ENCODE measurements at regions of chr19 and their contacts with region 1.

Region 1: DNA sequence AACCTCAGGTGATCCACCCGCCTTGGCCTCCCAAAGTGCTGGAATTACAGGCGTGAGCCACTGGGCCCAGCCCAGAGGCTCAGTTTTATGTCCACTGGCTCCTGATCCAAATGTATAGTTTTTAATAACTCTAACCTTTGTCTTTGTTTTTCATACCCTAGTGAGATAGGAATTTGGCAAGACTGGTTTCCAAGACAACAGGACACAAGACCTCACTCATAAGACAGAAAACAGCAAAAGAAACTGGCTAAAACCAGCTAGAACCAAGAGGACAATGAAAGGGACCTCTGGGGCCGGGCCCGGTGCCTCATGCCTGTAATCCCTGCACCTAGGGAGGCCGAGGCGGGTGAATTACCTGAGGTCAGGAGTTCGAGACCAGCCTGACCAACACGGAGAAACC is 27.6 kb downstream of the CPT1C start:
- DNase-seq: no peak
- ATAC-seq: no peak
- H3K4me3 ChIP-seq: no peak overlapping the region
- H3K4me3 Mint-ChIP-seq: peak overlapping the region; percentile 23 to 96 (median 77)
- H3K27ac ChIP-seq: no peak overlapping the region
- H3K27ac Mint-ChIP-seq: peak overlapping the region; percentile 8 to 97 (median 81)
- H3K4me1 ChIP-seq: peaks cover 6 to 9% of the 10 kb centered on the region in 2 donors
- H3K4me1 Mint-ChIP-seq: peaks cover 7 to 15% (median 11%) of the 10 kb centered on the region in 7 donors
- H3K27me3 ChIP-seq: no peaks in the 10 kb centered on the region
- H3K27me3 Mint-ChIP-seq: no peaks in the 10 kb centered on the region

Region 2: DNA sequence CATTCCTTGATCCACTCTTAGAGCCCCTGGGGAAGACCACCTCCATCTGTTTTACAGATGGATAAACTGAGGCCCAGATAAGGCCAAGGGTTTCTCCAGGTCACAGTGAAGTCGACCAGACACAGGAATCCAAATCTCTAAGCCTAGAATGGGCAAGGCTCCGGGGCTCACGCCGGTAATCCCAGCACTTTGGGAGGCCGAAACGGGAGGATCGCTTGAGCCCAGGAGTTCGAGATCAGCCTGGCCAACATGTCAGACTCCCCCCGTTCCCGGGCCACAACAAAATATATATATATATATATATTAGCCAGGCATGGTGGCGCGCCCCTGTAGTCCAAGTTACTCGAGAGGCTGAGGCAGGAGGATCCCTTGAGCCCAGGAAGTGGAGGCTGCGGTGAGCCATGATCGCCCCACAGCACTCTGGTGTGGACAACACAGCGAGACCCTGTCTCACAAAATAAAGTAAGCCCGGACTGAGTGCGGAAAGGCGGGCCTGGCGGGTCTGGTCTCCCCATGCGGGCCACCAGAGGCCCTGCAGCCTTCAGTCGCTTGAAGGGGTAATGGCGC is 231.7 kb before region 1 on chr19:
- CTCF ChIA-PET with region 1: no interaction called
- POLR2A ChIA-PET with region 1: no interaction called
- intact Hi-C with region 1: no loop called
- DNase-seq: no peak
- ATAC-seq: no peak
- H3K4me3 ChIP-seq: no peak overlapping the region
- H3K4me3 Mint-ChIP-seq: peak overlapping the region; percentile 95 to 99 (median 98)
- H3K27ac ChIP-seq: peak overlapping the region; percentile 92
- H3K27ac Mint-ChIP-seq: peak overlapping the region; percentile 89 to 99 (median 96)
- H3K4me1 ChIP-seq: peaks cover 19 to 26% of the 10 kb centered on the region in 2 donors
- H3K4me1 Mint-ChIP-seq: peaks cover 23 to 51% (median 40%) of the 10 kb centered on the region in 7 donors
- H3K27me3 ChIP-seq: no peaks in the 10 kb centered on the region
- H3K27me3 Mint-ChIP-seq: peaks cover 0 to 9% (median 0%) of the 10 kb centered on the region in 5 donors

Region 3: DNA sequence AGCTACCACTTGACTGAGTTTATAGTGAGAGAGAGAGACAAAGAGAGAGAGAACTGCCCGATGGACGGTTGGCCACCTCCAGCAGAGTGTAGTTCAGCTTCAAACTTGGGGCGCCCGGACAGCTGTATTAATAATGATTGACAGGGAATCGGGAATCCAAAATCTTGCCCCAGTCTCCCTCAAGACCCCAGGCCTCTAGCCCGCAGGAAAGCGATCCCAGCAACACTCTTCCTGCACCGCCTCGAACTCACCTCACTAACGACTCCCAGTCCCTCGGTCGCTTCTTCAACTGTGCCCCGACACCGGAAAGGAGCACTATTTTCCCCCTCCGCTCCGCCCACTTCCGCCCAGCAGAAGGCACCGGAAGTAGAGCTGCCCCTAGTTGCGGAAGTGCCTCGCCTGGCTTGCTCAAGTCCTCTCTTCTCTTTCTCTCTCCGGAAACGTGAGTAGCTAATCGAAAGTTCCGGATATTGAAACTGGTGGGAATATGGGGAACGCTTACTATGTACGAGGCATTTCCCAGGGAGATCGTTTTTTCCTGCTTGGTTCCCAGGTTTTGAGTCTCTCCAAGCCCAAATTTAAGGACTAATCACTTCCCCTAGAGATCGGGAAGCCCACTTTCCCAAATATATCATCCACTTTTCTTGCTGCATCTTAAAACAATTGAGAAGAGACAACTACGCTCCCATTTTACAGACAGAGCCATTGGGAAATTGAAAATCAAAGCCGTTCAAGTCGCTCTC is 138.1 kb before region 1 on chr19 and contains the start of gene NOSIP:
- CTCF ChIA-PET with region 1: no interaction called
- POLR2A ChIA-PET with region 1: no interaction called
- intact Hi-C with region 1: no loop called
- DNase-seq: peak; percentile 88 to 96 (median 94)
- ATAC-seq: peak; percentile 100
- H3K4me3 ChIP-seq: peak within 1 kb of the TSS; percentile 68
- H3K4me3 Mint-ChIP-seq: peak within 1 kb of the TSS; percentile 91 to 98 (median 94)
- H3K27ac ChIP-seq: peak within 1 kb of the TSS; percentile 84
- H3K27ac Mint-ChIP-seq: peak within 1 kb of the TSS; percentile 85 to 98 (median 92)
- H3K4me1 ChIP-seq: peaks cover 0 to 22% of the 10 kb centered on the region in 2 donors
- H3K4me1 Mint-ChIP-seq: peaks cover 20 to 49% (median 36%) of the 10 kb centered on the region in 7 donors
- H3K27me3 ChIP-seq: no peaks in the 10 kb centered on the region
- H3K27me3 Mint-ChIP-seq: no peaks in the 10 kb centered on the region
- total RNA-seq, gene NOSIP: 222 to 267 (median 228) TPM

Region 4: DNA sequence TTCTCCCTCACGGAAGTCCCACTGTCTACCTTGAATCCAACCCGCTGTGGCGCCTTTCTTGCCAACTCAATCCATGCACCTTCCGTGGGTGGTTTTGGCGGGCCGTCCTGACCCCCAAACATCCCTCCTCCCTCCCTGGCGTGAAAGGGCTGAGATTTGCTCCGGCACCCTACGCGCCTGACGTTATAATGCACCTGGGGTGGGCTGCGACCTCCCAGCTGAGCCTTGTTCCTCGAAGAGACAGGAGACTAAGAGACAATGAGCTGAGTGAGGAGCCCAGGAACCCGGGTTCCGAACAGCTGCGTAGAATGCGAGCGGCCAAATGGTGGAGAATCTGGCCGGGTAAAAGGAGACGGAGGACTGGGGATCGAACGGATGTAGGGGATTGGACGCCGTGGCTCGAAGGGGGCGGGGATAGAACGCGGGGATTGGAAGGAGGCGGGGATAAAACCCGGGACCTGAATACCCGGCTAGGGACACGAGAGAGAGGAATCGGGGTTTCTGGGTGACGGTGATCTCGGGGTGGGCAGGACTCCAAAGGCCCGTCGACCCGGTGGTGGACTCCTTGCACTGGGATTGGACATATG is 27.8 kb before region 1 on chr19 and contains the start of gene CPT1C:
- CTCF ChIA-PET with region 1: no interaction called
- POLR2A ChIA-PET with region 1: interaction called, 3 read pairs
- intact Hi-C with region 1: loop called in 1 of 2 experiments (anchors 2 kb)
- DNase-seq: peak in 7 of 9 donors; percentile 31 to 65 (median 46)
- ATAC-seq: peak; percentile 71
- H3K4me3 ChIP-seq: peak within 1 kb of the TSS; percentile 45
- H3K4me3 Mint-ChIP-seq: peak within 1 kb of the TSS; percentile 82 to 98 (median 86)
- H3K27ac ChIP-seq: peak within 1 kb of the TSS; percentile 44
- H3K27ac Mint-ChIP-seq: peak within 1 kb of the TSS; percentile 6 to 84 (median 45)
- H3K4me1 ChIP-seq: peaks cover 4 to 12% of the 10 kb centered on the region in 2 donors
- H3K4me1 Mint-ChIP-seq: peaks cover 19 to 38% (median 25%) of the 10 kb centered on the region in 7 donors
- H3K27me3 ChIP-seq: no peaks in the 10 kb centered on the region
- H3K27me3 Mint-ChIP-seq: peaks cover 5 to 15% (median 9%) of the 10 kb centered on the region in 5 donors
- total RNA-seq, gene CPT1C: 0.96 to 6.0 (median 1.5) TPM

Region 5: DNA sequence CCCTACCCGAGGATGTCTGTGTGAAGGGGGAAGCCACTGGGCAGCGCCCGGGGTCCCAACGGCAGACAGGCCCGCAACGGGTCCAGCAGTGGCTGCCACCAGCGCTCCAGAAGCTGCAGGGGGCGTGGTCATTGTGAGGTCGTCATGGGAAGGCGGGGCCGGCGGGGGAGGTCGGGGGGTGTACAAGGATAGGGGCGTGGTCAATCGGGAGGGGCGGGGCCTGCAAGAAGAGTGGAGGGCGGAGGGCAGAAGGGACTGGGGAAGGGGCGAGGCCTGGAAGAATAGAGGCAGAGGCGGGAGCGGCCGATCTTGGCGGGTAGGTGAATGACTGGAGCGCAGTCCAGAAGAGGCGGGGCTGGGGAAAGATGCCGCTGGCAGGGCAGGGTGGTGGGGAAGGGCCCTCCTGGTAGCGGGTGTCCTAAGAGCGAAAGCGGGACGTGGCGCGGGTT is 90.2 kb after region 1 on chr19:
- CTCF ChIA-PET with region 1: no interaction called
- POLR2A ChIA-PET with region 1: interaction called, 11 read pairs
- intact Hi-C with region 1: loop called in 1 of 2 experiments (anchors 1 kb)
- DNase-seq: peak; percentile 69 to 92 (median 83)
- ATAC-seq: peak; percentile 76
- H3K4me3 ChIP-seq: peak overlapping the region; percentile 71
- H3K4me3 Mint-ChIP-seq: peak overlapping the region; percentile 85 to 96 (median 90)
- H3K27ac ChIP-seq: peak overlapping the region; percentile 73
- H3K27ac Mint-ChIP-seq: peak overlapping the region; percentile 66 to 94 (median 84)
- H3K4me1 ChIP-seq: peaks cover 11 to 16% of the 10 kb centered on the region in 2 donors
- H3K4me1 Mint-ChIP-seq: peaks cover 20 to 39% (median 28%) of the 10 kb centered on the region in 7 donors
- H3K27me3 ChIP-seq: no peaks in the 10 kb centered on the region
- H3K27me3 Mint-ChIP-seq: no peaks in the 10 kb centered on the region

Region 6: DNA sequence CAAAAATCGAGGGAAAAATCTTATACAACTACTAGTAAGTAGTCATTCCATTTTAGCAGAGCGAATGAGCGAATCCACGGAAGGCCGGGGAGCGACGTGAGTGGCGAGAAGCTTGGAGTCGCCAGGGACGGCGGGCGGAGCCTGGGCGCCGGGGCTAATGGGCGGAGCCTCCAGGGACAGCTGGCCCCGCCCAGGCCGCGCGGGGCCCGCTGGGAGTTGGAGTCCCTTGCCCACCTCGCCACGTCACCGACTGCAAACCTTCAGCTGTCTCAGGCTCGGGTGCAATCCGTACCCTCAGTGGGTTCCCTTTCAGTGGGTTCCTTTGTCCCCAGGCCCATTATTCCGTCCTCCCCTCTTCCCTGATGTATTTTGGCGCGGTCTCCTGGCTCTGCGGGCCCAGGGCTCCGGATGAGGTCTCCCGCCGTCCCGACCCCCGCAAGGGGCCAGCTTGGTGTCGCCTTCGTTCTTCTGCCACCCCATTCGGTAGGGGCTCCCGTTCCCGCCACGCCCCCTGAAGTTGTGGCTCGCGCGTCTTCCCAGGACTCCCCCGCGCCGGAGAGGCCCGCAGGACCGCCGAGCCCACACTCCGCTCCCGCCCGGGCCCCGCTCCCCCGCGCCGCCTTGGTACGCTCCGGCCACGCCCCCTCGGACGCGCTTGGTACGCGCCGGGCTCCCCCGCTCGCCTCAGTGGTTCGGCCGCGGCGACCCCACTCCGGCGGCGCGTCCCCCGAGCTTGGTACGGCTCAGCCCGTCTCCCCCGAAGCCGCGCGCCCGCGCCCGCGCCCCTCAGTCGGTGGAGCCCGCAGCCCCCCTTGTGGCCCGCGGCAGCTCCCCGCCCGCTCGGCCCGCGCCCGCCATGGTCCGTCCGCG is 132.2 kb after region 1 on chr19 and contains the start of gene PTOV1:
- CTCF ChIA-PET with region 1: no interaction called
- POLR2A ChIA-PET with region 1: interaction called, 9 read pairs
- intact Hi-C with region 1: loop called in 1 of 2 experiments (anchors 2 kb)
- DNase-seq: peak; percentile 78 to 97 (median 88)
- ATAC-seq: peak; percentile 93
- H3K4me3 ChIP-seq: peak within 1 kb of the TSS; percentile 89
- H3K4me3 Mint-ChIP-seq: peak within 1 kb of the TSS; percentile 91 to 96 (median 92)
- H3K27ac ChIP-seq: peak within 1 kb of the TSS; percentile 99
- H3K27ac Mint-ChIP-seq: peak within 1 kb of the TSS; percentile 85 to 98 (median 95)
- H3K4me1 ChIP-seq: peaks cover 7 to 25% of the 10 kb centered on the region in 2 donors
- H3K4me1 Mint-ChIP-seq: peaks cover 22 to 37% (median 33%) of the 10 kb centered on the region in 7 donors
- H3K27me3 ChIP-seq: no peaks in the 10 kb centered on the region
- H3K27me3 Mint-ChIP-seq: peaks cover 0 to 11% (median 0%) of the 10 kb centered on the region in 5 donors
- total RNA-seq, gene PTOV1: 92.8 to 170 (median 160) TPM

Region 7: DNA sequence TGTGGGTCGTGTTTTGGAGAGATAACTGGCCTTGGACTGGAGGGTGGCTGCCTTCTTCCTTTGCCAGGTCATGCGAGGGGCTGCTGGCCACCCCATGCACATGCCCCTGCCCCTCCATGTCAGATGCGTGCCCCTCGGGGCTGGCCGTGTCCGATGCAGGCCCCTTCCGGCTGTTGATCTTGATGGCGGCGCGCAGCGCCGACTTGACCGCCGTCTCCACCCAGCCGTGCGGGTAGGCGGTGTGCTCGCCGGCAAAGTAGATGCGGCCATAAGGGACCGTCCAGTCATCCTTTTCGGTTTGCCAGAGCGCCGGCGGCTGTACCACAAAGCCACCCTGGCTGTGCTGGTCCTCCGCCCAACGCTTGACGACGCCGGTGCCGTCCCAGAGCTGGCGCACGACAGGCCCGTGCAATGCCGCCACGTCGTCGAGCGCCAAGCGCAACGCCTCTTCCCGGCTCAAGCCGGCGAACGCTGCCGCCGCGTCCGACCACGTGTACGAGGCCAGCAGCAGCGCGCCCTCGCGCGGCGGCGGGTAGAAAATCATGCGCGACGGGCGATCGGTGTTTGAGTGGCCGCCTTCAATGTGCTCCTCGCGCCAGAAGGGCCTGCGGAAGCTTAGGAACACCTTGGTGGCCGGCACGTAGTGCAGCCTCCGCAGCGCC is 171.3 kb after region 1 on chr19:
- CTCF ChIA-PET with region 1: no interaction called
- POLR2A ChIA-PET with region 1: no interaction called
- intact Hi-C with region 1: loop called in 1 of 2 experiments (anchors 5 kb)
- DNase-seq: peak; percentile 56 to 81 (median 75)
- ATAC-seq: peak; percentile 87
- H3K4me3 ChIP-seq: peak overlapping the region; percentile 69
- H3K4me3 Mint-ChIP-seq: peak overlapping the region; percentile 70 to 84 (median 79)
- H3K27ac ChIP-seq: no peak overlapping the region
- H3K27ac Mint-ChIP-seq: peak overlapping the region in 5 of 9 donors; percentile 25 to 79 (median 51)
- H3K4me1 ChIP-seq: peaks cover 0 to 5% of the 10 kb centered on the region in 2 donors
- H3K4me1 Mint-ChIP-seq: peaks cover 0 to 16% (median 3%) of the 10 kb centered on the region in 7 donors
- H3K27me3 ChIP-seq: no peaks in the 10 kb centered on the region
- H3K27me3 Mint-ChIP-seq: no peaks in the 10 kb centered on the region